CD14-positive monocyte (primary cell): ENCODE measurements at regions of chr5 and their contacts with region 1.

Region 1: DNA sequence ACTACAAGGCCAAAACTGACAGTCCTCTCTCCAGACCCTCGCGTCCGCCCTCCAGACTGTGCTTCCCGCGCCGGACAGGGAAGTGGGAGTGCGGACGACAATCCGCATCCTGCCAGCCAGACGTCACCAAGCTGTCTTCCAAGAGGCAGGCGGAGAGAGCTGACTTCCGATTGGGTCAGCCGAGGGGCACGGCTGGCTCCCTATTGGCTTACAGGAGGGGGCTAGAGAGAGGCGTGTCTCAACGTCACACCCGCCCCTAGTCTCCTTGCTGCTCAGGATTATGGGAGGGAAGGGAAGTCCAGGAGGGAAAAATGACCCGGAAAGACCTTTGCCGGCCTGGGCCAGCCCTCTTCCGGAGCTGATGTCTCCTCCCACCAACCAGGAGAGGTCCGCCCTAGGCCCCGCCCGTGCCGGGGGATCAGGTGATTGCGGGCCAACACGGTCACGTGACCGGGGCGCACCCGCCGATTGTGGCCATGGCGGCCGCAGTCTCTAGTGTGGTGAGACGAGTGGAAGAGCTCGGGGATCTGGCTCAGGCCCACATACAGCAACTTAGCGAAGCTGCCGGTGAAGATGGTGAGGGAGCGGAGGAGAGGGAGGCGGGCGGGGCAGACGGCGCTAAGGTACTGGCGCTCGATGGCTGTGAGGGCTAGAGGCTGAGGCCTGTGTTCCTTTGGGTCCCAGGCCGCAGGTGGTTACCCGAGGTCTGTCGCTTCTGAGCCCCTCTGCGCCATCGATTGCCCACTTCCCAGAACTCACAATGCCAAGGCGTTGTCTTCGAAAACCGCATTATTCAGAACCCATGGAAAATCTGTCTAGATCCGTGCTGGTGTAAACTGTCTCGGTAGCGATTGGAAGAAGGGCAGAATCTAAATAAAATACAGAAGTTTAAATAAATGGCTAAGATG is at the start of gene RIMOC1:
- DNase-seq: peak; percentile 98 to 99 (median 99)
- H3K4me3 ChIP-seq: peak within 1 kb of the TSS; percentile 62 to 81 (median 79)
- H3K4me3 Mint-ChIP-seq: peak within 1 kb of the TSS; percentile 95 to 98
- H3K27ac ChIP-seq: peak within 1 kb of the TSS; percentile 90 to 94
- H3K27ac Mint-ChIP-seq: peak within 1 kb of the TSS; percentile 92 to 99 (median 98)
- H3K4me1 ChIP-seq: peaks cover 18 to 20% of the 10 kb centered on the region in 2 donors
- H3K4me1 Mint-ChIP-seq: peaks cover 33% of the 10 kb centered on the region
- H3K27me3 ChIP-seq: no peaks in the 10 kb centered on the region
- H3K27me3 Mint-ChIP-seq: peaks cover 5 to 7% (median 6%) of the 10 kb centered on the region in 3 donors
- CTCF ChIP-seq: no peak
- polyA plus RNA-seq, gene RIMOC1: 4.6 to 15.3 (median 11.2) TPM

Region 2: GRCh38 chr5:40834849-40835787 is 1069.0 kb before region 1 on chr5 and contains the start of gene RPL37:
- intact Hi-C with region 1: loop called in 1 of 2 experiments (anchors 10 kb)
- DNase-seq: peak; percentile 93 to 96 (median 95)
- H3K4me3 ChIP-seq: peak within 1 kb of the TSS; percentile 86 to 99 (median 89)
- H3K4me3 Mint-ChIP-seq: peak within 1 kb of the TSS; percentile 95 to 99
- H3K27ac ChIP-seq: peak within 1 kb of the TSS; percentile 92 to 96
- H3K27ac Mint-ChIP-seq: peak within 1 kb of the TSS; percentile 96 to 99 (median 97)
- H3K4me1 ChIP-seq: peaks cover 38 to 45% of the 10 kb centered on the region in 2 donors
- H3K4me1 Mint-ChIP-seq: peaks cover 44% of the 10 kb centered on the region
- H3K27me3 ChIP-seq: no peaks in the 10 kb centered on the region
- H3K27me3 Mint-ChIP-seq: peaks cover 0 to 2% (median 0%) of the 10 kb centered on the region in 3 donors
- CTCF ChIP-seq: no peak
- polyA plus RNA-seq, gene RPL37: 87.9 to 813 (median 738) TPM

Region 3: GRCh38 chr5:43105369-43106289 is 1201.5 kb after region 1 on chr5:
- intact Hi-C with region 1: loop called in 1 of 2 experiments (anchors 5 kb)
- DNase-seq: peak; percentile 89 to 92 (median 91)
- H3K4me3 ChIP-seq: peak overlapping the region; percentile 45 to 90 (median 85)
- H3K4me3 Mint-ChIP-seq: peak overlapping the region; percentile 85 to 92
- H3K27ac ChIP-seq: peak overlapping the region; percentile 58 to 85
- H3K27ac Mint-ChIP-seq: peak overlapping the region; percentile 87 to 95 (median 91)
- H3K4me1 ChIP-seq: peaks cover 8 to 15% of the 10 kb centered on the region in 2 donors
- H3K4me1 Mint-ChIP-seq: peaks cover 18% of the 10 kb centered on the region
- H3K27me3 ChIP-seq: no peaks in the 10 kb centered on the region
- H3K27me3 Mint-ChIP-seq: peaks cover 0 to 1% (median 0%) of the 10 kb centered on the region in 3 donors
- CTCF ChIP-seq: peak; percentile 100

Region 4: GRCh38 chr5:43120720-43121564 is 1216.8 kb after region 1 on chr5 and contains the start of gene ZNF131:
- intact Hi-C with region 1: loop called in 1 of 2 experiments (anchors 5 kb)
- DNase-seq: peak; percentile 95 to 98 (median 96)
- H3K4me3 ChIP-seq: peak within 1 kb of the TSS; percentile 76 to 96 (median 89)
- H3K4me3 Mint-ChIP-seq: peak within 1 kb of the TSS; percentile 94 to 99
- H3K27ac ChIP-seq: peak within 1 kb of the TSS; percentile 95
- H3K27ac Mint-ChIP-seq: peak within 1 kb of the TSS; percentile 96 to 100 (median 98)
- H3K4me1 ChIP-seq: peaks cover 19 to 29% of the 10 kb centered on the region in 2 donors
- H3K4me1 Mint-ChIP-seq: peaks cover 24% of the 10 kb centered on the region
- H3K27me3 ChIP-seq: no peaks in the 10 kb centered on the region
- H3K27me3 Mint-ChIP-seq: peaks cover 0 to 3% (median 0%) of the 10 kb centered on the region in 3 donors
- CTCF ChIP-seq: no peak
- polyA plus RNA-seq, gene ZNF131: 13.4 to 18.8 (median 17.2) TPM